ENCODE measurements at regions of chr2 and their contacts with region 1.

Region 1: DNA sequence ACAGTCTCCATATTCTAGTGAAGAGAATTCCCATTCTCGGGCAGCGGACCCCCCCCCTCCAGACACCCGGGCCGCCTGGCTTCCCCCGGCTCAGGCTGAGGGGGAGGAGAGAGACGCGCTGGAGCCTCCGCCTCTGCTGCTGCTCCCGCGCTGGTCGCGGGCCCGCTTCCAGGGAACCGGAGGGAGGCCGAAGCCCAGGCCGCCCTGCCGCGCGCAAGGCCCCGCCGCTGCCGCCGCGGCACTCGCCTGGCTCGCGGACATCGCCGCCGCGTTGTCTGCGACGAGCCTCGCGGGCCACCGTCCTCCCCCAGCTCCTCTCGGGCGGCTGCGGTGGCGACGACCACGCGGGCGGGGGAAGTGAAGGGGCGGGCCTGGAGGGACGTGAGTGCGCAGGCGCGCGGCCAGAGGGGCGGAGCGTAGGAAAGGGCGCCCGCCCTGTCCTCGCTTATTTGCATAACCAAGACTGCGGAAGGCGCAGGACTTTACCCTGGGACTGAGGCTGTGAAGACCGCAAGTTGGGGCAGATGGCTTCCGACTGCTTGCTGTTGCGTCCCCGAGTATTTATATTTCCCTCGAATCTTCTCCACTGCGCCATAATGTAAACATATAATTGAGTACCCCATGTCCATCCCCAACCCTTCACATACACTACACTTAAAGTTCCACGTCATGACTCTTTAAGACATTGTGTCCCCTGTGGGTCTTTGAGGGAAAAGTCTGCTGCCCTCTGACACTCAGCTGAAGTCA is at the start of gene ARL5A:
- DNase-seq: peak; percentile 98
- H3K4me3 ChIP-seq: peak within 1 kb of the TSS; percentile 74 to 100 (median 99)
- H3K27ac ChIP-seq: peak within 1 kb of the TSS; percentile 89
- H3K4me1 ChIP-seq: peaks cover 33% of the 10 kb centered on the region
- H3K27me3 ChIP-seq: no peaks in the 10 kb centered on the region
- CTCF ChIP-seq: no peak
- POLR2A ChIP-seq: peak; percentile 87
- total RNA-seq, gene ARL5A: 73.2 and 77.5 TPM in 2 replicates

Region 2: GRCh38 chr2:151056870-151057269 is 771.4 kb before region 1 on chr2:
- CTCF ChIA-PET with region 1: no interaction called
- POLR2A ChIA-PET with region 1: no interaction called
- dilution Hi-C with region 1: no loop called
- intact Hi-C with region 1: no loop called
- DNase-seq: no peak
- H3K4me3 ChIP-seq: no peak overlapping the region
- H3K27ac ChIP-seq: no peak overlapping the region
- H3K4me1 ChIP-seq: no peaks in the 10 kb centered on the region
- H3K27me3 ChIP-seq: no peaks in the 10 kb centered on the region
- CTCF ChIP-seq: no peak
- POLR2A ChIP-seq: no peak

Region 3: DNA sequence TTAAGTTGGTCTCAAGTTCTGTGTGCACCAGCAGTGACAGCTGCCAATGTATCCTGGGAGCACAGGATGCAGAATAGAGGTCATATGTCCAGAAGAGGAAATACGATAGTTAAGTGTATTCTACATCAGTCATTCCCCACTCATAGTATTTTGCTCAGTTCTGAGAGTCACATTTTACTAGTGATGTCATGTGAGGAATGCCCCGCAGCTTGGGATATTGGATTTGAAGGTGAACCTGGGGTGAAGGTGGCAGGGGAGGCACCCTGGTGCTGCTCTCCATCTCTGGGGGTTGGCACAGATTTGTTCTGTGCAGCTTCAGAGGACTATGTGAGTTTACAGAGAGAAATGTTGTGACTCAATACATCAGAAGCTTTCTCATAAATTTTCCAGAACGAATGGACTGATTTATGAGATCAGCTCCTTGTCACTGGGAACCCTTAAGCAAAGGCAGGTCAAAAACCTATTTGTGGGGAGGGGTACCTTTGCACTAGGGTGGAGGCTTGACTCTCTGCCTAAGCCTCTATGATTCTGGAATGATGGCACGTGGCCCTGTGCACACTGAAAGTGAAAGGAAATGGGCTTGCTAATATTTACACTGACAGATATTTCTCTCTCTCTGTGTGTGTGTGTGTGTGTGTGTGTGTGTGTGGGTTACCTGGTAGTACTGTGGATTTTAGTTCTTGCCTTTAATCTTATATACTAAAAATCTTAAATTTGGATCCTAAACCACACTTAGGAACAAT is 190.0 kb before region 1 on chr2:
- CTCF ChIA-PET with region 1: no interaction called
- POLR2A ChIA-PET with region 1: no interaction called
- dilution Hi-C with region 1: no loop called
- intact Hi-C with region 1: loop called (anchors 5 kb)
- DNase-seq: peak; percentile 69
- H3K4me3 ChIP-seq: no peak overlapping the region
- H3K27ac ChIP-seq: peak overlapping the region; percentile 81
- H3K4me1 ChIP-seq: peaks cover 22% of the 10 kb centered on the region
- H3K27me3 ChIP-seq: no peaks in the 10 kb centered on the region
- CTCF ChIP-seq: no peak
- POLR2A ChIP-seq: no peak

Region 4: DNA sequence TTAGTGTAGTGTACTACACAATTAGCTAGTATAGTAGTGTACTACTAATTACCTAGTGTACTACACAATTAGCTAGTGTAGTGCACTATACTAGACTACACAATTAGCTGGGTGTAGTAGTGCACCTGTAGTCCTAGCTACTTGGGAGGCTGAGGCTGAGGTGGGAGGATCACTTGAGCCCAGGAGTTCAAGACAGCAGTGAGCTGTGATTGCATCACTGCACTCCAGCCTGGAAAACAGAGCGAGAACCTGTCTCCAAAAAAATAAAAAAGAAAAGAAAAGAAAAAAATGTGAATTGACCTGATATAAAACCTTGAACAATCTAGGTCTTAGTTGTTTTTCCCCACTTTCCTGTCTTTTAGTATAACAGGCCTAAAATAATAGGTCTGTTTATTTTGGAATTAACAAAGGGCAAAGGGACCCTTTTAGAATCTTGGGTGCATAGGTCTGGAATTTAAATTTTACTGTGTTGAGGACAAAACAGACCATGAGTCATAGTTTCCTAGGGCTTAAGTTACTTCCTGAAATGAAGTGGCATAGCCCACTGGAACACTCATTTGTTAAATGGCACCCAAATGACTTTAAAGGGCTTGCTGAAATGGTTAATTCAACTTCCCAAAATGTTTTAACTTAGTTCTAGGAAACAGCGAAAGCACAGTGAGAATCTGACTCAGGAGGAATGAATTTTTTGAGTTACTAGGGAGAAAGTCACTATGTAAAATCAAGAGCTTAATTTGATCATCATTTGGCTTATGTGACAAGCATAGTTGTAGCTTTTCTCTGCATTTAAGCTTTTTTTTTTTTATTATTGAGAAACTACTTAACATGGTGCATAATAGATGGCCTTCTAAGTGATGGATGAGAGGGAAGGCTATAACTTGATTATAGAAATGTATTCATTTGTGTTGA is 50.6 kb after region 1 on chr2:
- CTCF ChIA-PET with region 1: no interaction called
- POLR2A ChIA-PET with region 1: interaction called, 5 read pairs
- dilution Hi-C with region 1: no loop called
- intact Hi-C with region 1: loop called (anchors 1 kb)
- DNase-seq: peak; percentile 95
- H3K4me3 ChIP-seq: no peak overlapping the region
- H3K27ac ChIP-seq: peak overlapping the region; percentile 30
- H3K4me1 ChIP-seq: peaks cover 22% of the 10 kb centered on the region
- H3K27me3 ChIP-seq: no peaks in the 10 kb centered on the region
- CTCF ChIP-seq: no peak
- POLR2A ChIP-seq: no peak

Region 5: GRCh38 chr2:151946899-151947822 is 118.8 kb after region 1 on chr2:
- CTCF ChIA-PET with region 1: interaction called, 4 read pairs
- POLR2A ChIA-PET with region 1: no interaction called
- dilution Hi-C with region 1: no loop called
- intact Hi-C with region 1: loop called (anchors 5 kb)
- DNase-seq: peak; percentile 52
- H3K4me3 ChIP-seq: no peak overlapping the region
- H3K27ac ChIP-seq: no peak overlapping the region
- H3K4me1 ChIP-seq: no peaks in the 10 kb centered on the region
- H3K27me3 ChIP-seq: peaks cover 8 to 9% of the 10 kb centered on the region in 2 experiments
- CTCF ChIP-seq: peak; percentile 68
- POLR2A ChIP-seq: no peak

Region 6: GRCh38 chr2:151989378-151989777 is 161.1 kb after region 1 on chr2:
- CTCF ChIA-PET with region 1: no interaction called
- POLR2A ChIA-PET with region 1: no interaction called
- dilution Hi-C with region 1: no loop called
- intact Hi-C with region 1: no loop called
- DNase-seq: no peak
- H3K4me3 ChIP-seq: no peak overlapping the region
- H3K27ac ChIP-seq: no peak overlapping the region
- H3K4me1 ChIP-seq: no peaks in the 10 kb centered on the region
- H3K27me3 ChIP-seq: peaks cover 8 to 9% of the 10 kb centered on the region in 2 experiments
- CTCF ChIP-seq: no peak
- POLR2A ChIP-seq: no peak

Region 7: DNA sequence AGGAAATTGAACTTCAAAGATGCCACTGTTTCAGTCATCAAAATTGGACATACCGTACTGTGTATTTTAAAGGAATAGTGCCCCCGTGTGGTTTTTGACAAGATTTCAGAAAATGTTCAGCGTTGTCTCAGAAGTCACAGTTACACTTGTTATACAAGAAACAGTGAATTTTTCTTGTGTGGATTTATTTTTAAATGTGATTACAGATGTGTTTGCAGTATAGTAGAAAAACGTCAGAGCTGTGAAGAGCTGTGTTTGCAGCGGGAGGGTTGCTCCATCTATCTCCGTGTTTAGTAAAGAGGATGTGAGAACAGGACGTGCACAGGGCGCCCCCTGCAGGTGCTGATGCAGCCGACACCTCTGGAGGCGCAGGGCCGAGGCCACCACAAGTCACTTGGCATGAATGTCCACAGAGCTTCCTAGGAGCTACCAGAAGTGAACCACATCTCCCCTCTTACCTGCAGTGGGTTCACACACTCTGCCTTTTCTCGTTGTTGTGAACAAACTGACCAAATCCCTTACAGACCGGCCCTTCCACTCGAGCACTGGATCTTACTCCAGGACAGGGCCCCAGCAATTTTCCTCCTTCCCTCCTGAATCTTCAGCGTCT is 197.5 kb after region 1 on chr2:
- CTCF ChIA-PET with region 1: interaction called, 10 read pairs
- POLR2A ChIA-PET with region 1: no interaction called
- dilution Hi-C with region 1: no loop called
- intact Hi-C with region 1: no loop called
- DNase-seq: peak; percentile 86
- H3K4me3 ChIP-seq: peak overlapping the region; percentile 8 to 64 (median 12)
- H3K27ac ChIP-seq: no peak overlapping the region
- H3K4me1 ChIP-seq: peaks cover 4% of the 10 kb centered on the region
- H3K27me3 ChIP-seq: peaks cover 2 to 17% of the 10 kb centered on the region in 2 experiments
- CTCF ChIP-seq: peak; percentile 97 to 98
- POLR2A ChIP-seq: no peak

Region 8: DNA sequence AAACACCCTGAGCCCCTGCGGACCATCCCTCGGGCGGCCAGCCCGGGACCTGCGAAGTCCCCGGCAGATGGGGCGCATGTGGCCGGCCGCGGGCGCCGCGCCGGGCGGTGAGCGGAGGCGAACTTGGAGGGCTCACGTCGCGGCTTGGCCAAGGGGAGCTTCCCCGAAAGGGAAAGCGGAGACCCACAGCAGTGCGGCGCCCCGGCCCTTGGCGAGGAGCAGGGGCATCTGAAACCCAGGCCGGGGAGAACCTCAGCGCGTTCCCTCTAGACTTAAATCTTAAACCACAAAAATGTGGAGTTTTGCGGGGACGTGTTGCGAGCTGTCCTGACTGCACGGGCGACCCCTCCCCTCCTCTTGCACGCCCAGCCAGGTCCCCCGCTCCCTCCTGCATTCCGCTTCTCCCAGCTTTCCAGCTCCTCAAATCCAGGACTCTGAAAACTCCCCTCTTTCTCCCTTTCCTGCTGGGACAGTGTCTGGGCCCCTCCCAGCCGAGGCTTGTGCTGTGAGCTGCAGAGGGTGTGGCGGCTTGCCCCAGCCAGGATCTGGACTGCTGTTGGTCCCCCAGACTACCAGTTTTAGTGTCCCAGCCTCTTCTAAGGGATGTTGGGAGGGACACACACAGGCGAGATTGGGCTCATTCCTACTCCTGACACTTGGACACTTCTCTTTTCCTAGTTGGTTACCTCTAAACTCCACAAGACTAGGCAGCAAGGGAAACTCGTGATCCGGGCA is 508.0 kb after region 1 on chr2:
- CTCF ChIA-PET with region 1: no interaction called
- POLR2A ChIA-PET with region 1: no interaction called
- dilution Hi-C with region 1: no loop called
- intact Hi-C with region 1: no loop called
- DNase-seq: peak; percentile 54
- H3K4me3 ChIP-seq: peak overlapping the region; percentile 81 to 96 (median 95)
- H3K27ac ChIP-seq: no peak overlapping the region
- H3K4me1 ChIP-seq: peaks cover 16% of the 10 kb centered on the region
- H3K27me3 ChIP-seq: no peaks in the 10 kb centered on the region
- CTCF ChIP-seq: no peak
- POLR2A ChIP-seq: peak; percentile 37